Natural killer cell (primary cell): ENCODE measurements at regions of chr2 and their contacts with region 1.

Region 1: DNA sequence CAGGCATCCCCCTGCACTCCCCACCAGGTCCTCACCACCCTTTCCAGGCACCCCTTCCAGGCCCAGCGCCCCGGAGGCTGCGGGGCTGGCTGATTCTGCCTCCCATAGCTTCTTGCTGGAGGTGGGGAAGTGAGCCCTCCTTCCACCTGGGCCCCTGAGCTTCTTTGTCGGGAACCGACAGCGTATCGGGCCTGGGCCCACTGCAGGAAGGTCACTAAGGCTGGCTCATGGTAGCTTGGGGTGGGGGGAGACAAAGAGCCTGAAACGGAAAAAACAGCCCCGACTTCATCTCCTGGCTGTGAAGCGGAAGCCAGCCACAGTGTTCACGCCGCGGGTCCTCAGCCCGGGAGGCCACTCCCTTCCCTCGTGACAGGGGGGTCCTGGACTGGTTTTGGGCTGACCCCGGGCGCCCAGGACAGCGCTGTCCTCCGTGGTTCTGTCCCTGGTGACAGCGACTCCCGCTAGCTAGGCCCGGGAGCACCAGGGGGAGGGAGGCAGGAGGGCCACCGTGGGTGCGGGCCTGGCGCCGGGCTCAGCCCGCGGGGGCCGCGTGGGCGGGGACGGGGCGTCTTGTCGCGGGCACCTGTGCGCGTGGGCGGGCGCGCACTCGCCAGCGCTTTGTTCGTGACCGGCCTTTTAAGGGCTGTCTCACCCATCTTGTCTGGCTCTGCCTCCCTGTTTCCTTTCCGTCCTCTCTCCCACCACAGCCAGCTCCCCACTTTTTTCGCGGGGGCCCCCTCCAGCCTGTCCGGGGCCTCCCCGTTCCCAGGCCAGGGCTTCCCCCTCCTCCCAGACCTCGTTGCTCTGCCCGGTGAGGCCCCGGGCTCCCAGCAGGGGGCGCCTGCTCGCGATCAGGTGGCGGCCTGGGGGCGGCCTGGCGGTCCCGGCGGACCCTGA is 64.9 kb downstream of the DNMT3A start:
- DNase-seq: peak; percentile 83 to 84
- ATAC-seq: peak; percentile 61 to 77 (median 68)
- H3K4me3 ChIP-seq: peak overlapping the region; percentile 42
- H3K4me3 Mint-ChIP-seq: peak overlapping the region; percentile 79
- H3K27ac ChIP-seq: peak overlapping the region; percentile 95
- H3K27ac Mint-ChIP-seq: peak overlapping the region; percentile 88 to 96
- H3K4me1 ChIP-seq: peaks cover 84% of the 10 kb centered on the region
- H3K4me1 Mint-ChIP-seq: peaks cover 44 to 56% of the 10 kb centered on the region in 2 donors
- H3K27me3 ChIP-seq: no peaks in the 10 kb centered on the region
- H3K27me3 Mint-ChIP-seq: no peaks in the 10 kb centered on the region
- CTCF ChIP-seq: peak; percentile 92

Region 2: DNA sequence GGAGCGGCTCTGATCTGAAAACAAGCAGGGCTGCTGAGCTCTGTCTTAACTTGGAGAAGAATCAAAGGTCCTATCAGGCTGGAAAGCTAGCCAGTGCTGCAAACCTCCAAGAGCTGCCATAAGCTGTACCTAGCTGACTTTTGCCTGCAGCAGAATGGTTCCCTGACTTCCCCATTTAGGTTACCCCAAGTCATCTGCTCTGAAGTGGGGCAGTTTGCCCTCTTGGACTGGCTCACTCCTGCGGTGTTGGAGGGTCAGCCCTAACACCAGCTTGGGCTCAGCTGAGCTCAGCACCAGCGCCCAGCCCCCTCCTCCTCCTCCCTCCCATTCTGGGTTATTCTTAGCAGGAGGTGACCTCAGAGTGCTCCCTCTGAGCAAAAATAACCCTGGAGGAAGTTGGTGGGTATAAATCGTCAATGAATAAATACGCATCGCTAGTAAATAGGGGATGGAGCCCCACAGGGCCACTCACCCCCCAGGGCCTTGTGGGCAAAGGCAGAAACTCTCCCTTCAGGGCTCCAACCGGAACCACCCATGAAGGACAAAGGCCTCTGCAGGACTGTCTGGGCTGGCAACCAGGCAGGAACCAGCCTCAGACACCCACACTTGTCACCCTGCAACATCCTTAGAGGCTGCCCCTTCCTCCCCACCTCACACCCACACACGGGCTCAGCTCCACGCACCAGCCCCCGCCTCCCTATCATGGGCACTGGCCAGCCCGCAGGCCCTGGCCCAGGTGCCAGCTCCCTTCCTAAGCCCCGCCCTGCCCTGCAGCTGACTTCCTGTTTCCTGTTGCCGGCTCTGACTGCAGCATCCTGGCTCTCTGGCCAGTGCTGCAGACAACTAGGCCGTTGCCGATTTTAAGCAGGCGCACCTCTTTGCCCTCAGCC is 18.0 kb after region 1 on chr2:
- intact Hi-C with region 1: loop called (anchors 2 kb)
- DNase-seq: peak; percentile 75 to 87
- ATAC-seq: peak; percentile 83 to 93 (median 91)
- H3K4me3 ChIP-seq: peak overlapping the region; percentile 11
- H3K4me3 Mint-ChIP-seq: peak overlapping the region; percentile 84
- H3K27ac ChIP-seq: peak overlapping the region; percentile 82
- H3K27ac Mint-ChIP-seq: peak overlapping the region; percentile 93 to 94
- H3K4me1 ChIP-seq: peaks cover 71% of the 10 kb centered on the region
- H3K4me1 Mint-ChIP-seq: peaks cover 31 to 37% of the 10 kb centered on the region in 2 donors
- H3K27me3 ChIP-seq: no peaks in the 10 kb centered on the region
- H3K27me3 Mint-ChIP-seq: no peaks in the 10 kb centered on the region
- CTCF ChIP-seq: no peak